ENCODE measurements at regions of chr1 and their contacts with region 1.

Region 1: DNA sequence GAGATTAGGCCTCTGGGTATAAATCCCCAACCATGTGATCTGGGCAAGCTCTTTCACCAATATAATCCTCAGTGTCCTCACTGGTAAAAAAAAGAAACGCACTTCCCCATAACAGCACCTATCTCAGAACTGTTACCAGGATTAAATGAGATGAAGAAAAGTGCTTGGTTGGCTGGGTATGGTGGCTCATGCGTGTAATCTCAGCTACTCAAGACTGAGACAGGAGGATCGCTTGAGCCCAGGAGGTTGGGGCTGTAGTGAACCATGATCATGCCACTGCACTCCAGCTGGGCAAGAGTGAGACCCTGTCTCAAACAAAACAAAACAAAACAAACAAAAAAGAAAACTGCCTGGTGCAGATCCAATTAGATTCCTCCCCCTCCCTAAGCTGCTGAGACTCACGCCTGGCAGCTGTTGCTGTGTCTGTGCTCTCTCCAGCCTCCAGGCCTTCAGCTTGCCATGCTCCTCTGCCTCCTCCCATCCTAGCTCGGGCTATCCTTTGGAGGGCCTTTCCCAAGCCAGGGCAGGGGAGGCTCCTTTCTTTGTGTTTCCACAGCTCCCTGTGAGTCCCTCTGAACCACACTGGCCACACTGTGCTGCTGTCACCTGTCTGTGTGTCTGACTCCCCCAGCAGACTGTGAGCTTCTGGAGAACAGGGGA is 19.0 kb downstream of the CYB5RL start:
- DNase-seq: no peak
- ATAC-seq: no peak
- H3K4me3 Mint-ChIP-seq: no peak overlapping the region
- H3K27ac Mint-ChIP-seq: no peak overlapping the region
- H3K4me1 Mint-ChIP-seq: peaks cover 4% of the 10 kb centered on the region
- H3K27me3 Mint-ChIP-seq: no peaks in the 10 kb centered on the region
- CTCF ChIP-seq: no peak

Region 2: GRCh38 chr1:54163051-54163450 is 17.8 kb before region 1 on chr1:
- CTCF ChIA-PET with region 1: interaction called, 12 read pairs
- POLR2A ChIA-PET with region 1: no interaction called
- DNase-seq: no peak
- ATAC-seq: no peak
- H3K4me3 Mint-ChIP-seq: no peak overlapping the region
- H3K27ac Mint-ChIP-seq: no peak overlapping the region
- H3K4me1 Mint-ChIP-seq: no peaks in the 10 kb centered on the region
- H3K27me3 Mint-ChIP-seq: peaks cover 3% of the 10 kb centered on the region; the same call in 1 of the 2 replicates
- CTCF ChIP-seq: no peak

Region 3: DNA sequence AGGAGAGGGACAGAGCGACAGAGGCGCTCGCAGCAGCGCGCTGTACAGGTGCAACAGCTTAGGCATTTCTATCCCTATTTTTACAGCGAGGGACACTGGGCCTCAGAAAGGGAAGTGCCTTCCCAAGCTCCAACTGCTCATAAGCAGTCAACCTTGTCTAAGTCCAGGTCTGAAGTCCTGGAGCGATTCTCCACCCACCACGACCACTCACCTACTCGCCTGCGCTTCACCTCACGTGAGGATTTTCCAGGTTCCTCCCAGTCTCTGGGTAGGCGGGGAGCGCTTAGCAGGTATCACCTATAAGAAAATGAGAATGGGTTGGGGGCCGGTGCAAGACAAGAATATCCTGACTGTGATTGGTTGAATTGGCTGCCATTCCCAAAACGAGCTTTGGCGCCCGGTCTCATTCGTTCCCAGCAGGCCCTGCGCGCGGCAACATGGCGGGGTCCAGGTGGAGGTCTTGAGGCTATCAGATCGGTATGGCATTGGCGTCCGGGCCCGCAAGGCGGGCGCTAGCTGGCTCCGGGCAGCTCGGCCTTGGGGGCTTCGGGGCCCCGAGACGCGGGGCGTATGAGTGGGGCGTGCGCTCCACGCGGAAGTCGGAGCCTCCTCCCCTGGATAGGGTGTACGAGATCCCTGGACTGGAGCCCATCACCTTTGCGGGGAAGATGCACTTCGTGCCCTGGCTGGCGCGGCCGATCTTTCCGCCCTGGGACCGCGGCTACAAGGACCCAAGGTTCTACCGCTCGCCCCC is 19.1 kb after region 1 on chr1 and contains the starts of genes CYB5RL and MRPL37:
- CTCF ChIA-PET with region 1: interaction called, 25 read pairs
- POLR2A ChIA-PET with region 1: interaction called, 3 read pairs
- DNase-seq: peak; percentile 93
- ATAC-seq: peak; percentile 99
- H3K4me3 Mint-ChIP-seq: peak within 1 kb of the TSS; percentile 86
- H3K27ac Mint-ChIP-seq: peak within 1 kb of the TSS; percentile 39
- H3K4me1 Mint-ChIP-seq: peaks cover 17% of the 10 kb centered on the region
- H3K27me3 Mint-ChIP-seq: no peaks in the 10 kb centered on the region
- CTCF ChIP-seq: no peak
- total RNA-seq, gene CYB5RL: 13.1 to 14.2 TPM (median 13.4 TPM) in 3 replicates
- total RNA-seq, gene MRPL37: 125 to 143 TPM (median 130 TPM) in 3 replicates